ENCODE measurements at regions of chr17 and their contacts with region 1.

Region 1: DNA sequence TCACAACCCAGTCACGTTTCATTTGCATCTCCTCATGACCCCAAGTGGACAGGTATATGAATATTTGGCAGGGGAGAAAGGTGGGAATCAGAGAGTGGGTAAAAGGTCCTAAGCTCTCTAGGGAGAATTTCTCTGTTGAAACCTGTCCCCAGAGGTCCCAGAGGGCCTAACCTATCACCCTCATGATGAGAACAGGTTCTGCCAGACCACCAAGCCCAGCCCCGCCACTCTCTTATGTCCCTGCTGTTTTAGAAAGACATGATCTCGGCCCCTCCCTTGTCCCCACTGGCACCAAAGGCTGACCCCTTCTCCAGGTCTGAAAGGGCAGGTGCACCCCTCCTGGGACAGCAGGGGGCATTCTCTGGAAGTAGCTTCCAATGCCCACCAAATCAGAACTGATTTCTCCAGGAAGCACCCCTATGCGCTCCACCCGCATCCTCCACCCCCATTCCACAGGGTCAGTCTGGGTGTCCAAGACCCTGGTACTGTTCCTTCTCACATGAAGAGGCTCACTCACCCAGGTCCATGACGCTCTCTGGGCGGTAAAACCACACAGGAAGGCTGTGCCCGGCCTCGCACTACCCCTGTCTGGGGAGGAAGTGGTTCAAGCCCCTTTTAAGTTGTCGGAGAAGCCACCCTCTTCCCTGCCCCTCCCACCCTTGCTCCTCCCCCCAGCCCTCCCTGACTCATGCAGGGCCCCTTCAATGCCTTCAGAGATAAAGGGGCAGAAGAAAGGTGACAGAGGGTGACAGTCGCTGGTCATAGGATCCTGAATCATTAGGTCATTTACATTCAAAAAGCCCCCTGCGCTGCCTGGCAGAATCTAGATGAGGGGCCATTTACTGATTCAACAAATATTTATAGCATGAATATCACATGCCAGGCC is at the start of gene CCR7:
- DNase-seq: peak; percentile 67
- CTCF ChIP-seq: no peak

Region 2: DNA sequence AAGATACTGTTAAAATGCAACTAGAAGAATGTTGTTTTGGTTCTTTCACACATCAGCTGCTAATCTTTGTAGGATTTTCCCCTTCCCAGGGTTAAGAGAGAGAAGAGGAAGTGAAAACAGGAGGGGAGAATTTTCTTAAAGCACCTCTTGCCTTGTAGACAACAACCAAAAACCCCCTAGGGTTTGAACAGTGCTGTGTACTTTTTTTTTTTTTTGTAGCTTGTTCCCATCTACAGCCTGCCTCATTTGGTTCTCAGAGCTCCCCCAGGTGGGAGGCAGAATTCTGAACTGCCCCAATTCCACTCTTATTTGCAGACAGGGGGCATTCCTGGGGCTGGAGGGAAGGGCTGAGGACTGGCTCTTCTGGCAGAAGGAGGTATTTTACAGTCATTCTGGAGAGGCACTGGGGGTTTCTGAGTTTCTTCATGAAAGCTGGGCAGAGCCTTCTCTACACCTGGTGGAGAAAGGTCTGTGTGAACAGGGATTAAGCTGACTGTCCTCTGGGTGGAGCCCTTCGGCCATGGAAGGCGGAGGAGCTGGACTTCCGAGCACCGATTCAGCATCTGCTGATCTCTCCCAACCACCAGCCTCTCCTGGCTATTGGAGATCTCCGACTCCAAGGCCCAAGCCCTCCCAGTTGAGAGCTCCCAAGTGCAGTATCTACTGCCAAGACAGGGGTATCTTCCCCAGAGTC is 50.3 kb after region 1 on chr17:
- in situ Hi-C with region 1: loop called (anchors 5 kb)
- DNase-seq: peak; percentile 84
- CTCF ChIP-seq: peak; percentile 51